ENCODE measurements at regions of chr2 and their contacts with region 1.

Region 1: GRCh38 chr2:208300847-208301618 is 35.0 kb downstream of the PIKFYVE start:
- DNase-seq: no peak
- ATAC-seq: no peak
- H3K4me3 ChIP-seq: no peak overlapping the region
- H3K4me3 Mint-ChIP-seq: no peak overlapping the region
- H3K27ac ChIP-seq: peak overlapping the region in 1 of 2 donors; percentile 14
- H3K27ac Mint-ChIP-seq: no peak overlapping the region
- H3K4me1 ChIP-seq: no peaks in the 10 kb centered on the region
- H3K4me1 Mint-ChIP-seq: peaks cover 17% of the 10 kb centered on the region
- H3K27me3 ChIP-seq: no peaks in the 10 kb centered on the region
- H3K27me3 Mint-ChIP-seq: no peaks in the 10 kb centered on the region
- CTCF ChIP-seq: no peak

Region 2: DNA sequence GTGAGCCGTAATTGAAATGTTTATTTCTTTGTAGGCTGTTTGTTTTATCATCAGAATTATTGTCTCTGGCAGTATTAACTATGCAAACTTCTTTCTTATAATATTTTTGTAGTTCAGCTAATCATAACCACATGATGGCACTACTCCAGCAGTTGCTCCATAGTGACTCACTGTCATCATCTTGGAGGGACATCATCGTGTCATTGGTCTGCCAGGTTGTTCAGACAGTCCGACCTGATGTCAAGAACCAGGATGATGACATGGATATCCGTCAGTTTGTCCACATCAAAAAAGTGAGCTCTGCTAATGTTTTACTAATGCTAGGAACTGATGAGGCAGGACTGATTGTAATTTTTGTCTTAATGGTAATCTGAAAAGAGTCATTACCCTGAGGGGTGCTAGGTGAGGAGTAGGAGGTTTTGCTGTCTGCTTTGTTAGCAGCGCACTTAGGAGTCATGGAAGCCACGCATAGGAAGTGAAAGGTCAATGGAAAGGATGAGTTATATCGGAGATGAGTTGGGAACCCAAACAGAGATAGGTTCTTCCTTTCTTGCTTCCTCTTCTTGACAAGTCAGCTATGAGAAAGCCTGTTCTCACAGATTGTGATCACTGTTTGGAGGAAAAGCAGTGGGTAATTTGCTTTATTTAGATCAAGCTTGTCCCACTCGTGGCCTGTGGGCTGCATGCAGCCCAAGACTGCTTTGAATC is 14.2 kb after region 1 on chr2:
- CTCF ChIA-PET with region 1: interaction called, 7 read pairs
- POLR2A ChIA-PET with region 1: no interaction called
- intact Hi-C with region 1: loop called (anchors 2 kb)
- DNase-seq: peak; percentile 65
- ATAC-seq: peak; percentile 52
- H3K4me3 ChIP-seq: peak overlapping the region in 3 of 5 experiments; percentile 20 to 71 (median 34)
- H3K4me3 Mint-ChIP-seq: peak overlapping the region; percentile 84
- H3K27ac ChIP-seq: peak overlapping the region; percentile 76 to 96
- H3K27ac Mint-ChIP-seq: peak overlapping the region; percentile 95
- H3K4me1 ChIP-seq: peaks cover 65 to 78% of the 10 kb centered on the region in 2 donors
- H3K4me1 Mint-ChIP-seq: peaks cover 75% of the 10 kb centered on the region
- H3K27me3 ChIP-seq: no peaks in the 10 kb centered on the region
- H3K27me3 Mint-ChIP-seq: no peaks in the 10 kb centered on the region
- CTCF ChIP-seq: peak; percentile 16

Region 3: DNA sequence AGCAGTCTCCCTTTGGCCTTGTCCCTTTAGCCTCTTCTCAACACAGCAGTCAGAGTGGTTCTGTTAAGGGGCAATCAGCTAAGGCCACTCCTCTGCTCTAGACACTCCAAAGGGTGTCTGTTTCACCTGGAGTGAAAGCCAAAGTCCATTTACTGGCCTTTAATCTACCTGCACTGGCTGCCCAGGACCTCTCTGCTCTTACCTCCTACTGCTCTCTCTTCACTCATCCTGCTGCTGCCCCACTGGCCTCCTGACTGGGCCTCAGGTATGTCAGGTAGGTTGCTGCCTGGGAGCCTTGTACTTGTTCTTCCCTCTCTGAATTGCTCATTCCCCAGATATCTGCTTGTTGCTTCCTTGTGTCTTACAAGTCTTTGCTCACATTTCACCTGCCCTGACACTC is 33.2 kb after region 1 on chr2:
- CTCF ChIA-PET with region 1: no interaction called
- POLR2A ChIA-PET with region 1: no interaction called
- intact Hi-C with region 1: loop called (anchors 5 kb)
- DNase-seq: no peak
- ATAC-seq: no peak
- H3K4me3 ChIP-seq: no peak overlapping the region
- H3K4me3 Mint-ChIP-seq: no peak overlapping the region
- H3K27ac ChIP-seq: peak overlapping the region in 1 of 2 donors; percentile 55
- H3K27ac Mint-ChIP-seq: peak overlapping the region; percentile 64
- H3K4me1 ChIP-seq: no peaks in the 10 kb centered on the region
- H3K4me1 Mint-ChIP-seq: peaks cover 7% of the 10 kb centered on the region
- H3K27me3 ChIP-seq: no peaks in the 10 kb centered on the region
- H3K27me3 Mint-ChIP-seq: no peaks in the 10 kb centered on the region
- CTCF ChIP-seq: no peak

Measured in B cell (primary cell).